ENCODE measurements at regions of chr14 and their contacts with region 1.

Region 1: DNA sequence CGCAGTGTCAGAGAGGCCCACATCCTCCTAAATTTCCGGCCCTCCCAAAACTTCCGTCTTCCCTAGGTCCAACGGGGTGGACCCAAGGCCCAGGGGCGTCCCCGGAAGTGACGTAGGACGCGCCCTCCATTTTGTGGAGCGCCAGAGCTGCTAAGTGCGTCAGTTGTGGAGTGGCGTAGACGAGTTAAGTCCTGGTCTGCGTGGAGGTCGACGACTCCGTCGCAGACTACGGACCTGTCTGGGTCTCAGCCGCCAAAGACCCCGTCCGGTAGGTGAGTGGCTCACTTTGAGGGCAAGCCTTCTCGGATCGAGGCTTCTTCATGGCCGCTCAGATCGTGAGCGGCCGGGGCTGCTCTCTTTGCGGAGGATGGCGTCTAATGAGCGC is at the start of gene SRSF5:
- DNase-seq: peak; percentile 95 to 98 (median 97)
- H3K4me3 ChIP-seq: peak within 1 kb of the TSS; percentile 75 to 100 (median 92)
- H3K27ac ChIP-seq: peak within 1 kb of the TSS; percentile 93 to 100 (median 100)
- H3K27me3 ChIP-seq: no peaks in the 10 kb centered on the region
- CTCF ChIP-seq: peak in 5 of 56 donors; percentile 8 to 22 (median 17)
- total RNA-seq, gene SRSF5: 348 to 822 (median 535) TPM

Region 2: DNA sequence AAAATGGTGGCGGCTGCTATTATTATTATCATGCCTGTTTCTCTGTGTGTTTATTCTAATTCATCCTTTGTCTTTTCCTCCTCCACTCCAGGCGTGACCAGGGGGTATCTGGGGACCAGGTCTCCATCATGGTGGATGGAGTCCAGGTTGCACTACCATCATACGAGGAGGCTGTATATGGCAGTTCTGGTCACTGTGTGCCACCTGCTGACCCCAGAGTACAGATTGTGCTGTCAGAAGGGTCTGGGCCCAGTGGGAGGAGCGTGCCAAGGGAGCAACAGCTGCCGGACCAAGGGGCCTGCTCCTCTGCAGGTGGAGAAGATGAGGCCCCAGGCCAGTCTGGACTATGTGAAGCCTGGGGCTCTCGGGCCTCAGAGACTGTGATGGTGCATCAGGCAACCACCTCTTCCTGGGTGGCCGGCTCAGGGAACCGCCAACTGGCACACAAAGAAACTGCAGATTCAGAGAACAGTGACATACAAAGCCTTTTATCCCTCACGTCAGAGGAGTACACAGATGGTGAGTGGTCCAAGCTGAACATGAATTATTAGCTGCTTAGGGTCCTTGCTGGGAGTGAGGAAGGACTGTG is 58.3 kb before region 1 on chr14:
- intact Hi-C with region 1: loop called in 1 of 2 experiments (anchors 5 kb)
- DNase-seq: peak in 8 of 10 donors; percentile 33 to 68 (median 64)
- H3K4me3 ChIP-seq: no peak overlapping the region
- H3K27ac ChIP-seq: peak overlapping the region in 55 of 59 donors; percentile 4 to 88 (median 67)
- H3K27me3 ChIP-seq: no peaks in the 10 kb centered on the region
- CTCF ChIP-seq: peak in 44 of 56 donors; percentile 18 to 65 (median 42)